B cell (primary cell): ENCODE measurements at regions of chr1 and their contacts with region 1.

Region 1: DNA sequence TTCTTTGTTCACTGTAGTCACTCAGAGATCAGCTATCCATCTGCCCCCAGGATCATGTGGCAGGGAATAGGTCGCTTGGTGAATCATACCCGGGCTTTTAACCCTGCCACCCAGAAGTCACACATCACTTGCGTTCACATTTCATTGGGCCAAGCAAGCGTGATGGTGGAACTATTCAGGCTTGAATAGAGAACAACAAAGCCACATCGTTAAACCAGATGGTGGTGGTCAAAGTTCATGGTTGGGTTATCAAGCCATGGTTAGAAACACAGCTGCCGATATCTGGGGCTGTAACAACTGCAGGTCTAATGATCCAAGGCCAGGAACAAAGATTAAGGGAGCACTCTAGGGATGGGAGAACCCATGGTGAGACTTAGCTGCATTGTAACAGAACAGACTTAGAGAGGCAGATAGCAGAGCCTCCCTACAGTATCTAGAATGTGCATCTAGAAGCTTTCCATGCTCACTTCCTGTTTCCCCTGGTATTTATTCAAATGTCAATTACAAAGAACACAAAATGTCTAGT is 40.0 kb upstream of the PTPRC start:
- DNase-seq: peak; percentile 90
- ATAC-seq: peak; percentile 81
- H3K4me3 ChIP-seq: peak overlapping the region; percentile 44 to 70 (median 64)
- H3K4me3 Mint-ChIP-seq: peak overlapping the region; percentile 97
- H3K27ac ChIP-seq: peak overlapping the region; percentile 94 to 96
- H3K27ac Mint-ChIP-seq: peak overlapping the region; percentile 99
- H3K4me1 ChIP-seq: peaks cover 75 to 80% of the 10 kb centered on the region in 2 donors
- H3K4me1 Mint-ChIP-seq: peaks cover 81% of the 10 kb centered on the region
- H3K27me3 ChIP-seq: no peaks in the 10 kb centered on the region
- H3K27me3 Mint-ChIP-seq: no peaks in the 10 kb centered on the region
- CTCF ChIP-seq: no peak

Region 2: GRCh38 chr1:198534548-198535418 is 64.1 kb before region 1 on chr1:
- CTCF ChIA-PET with region 1: interaction called, 10 read pairs
- POLR2A ChIA-PET with region 1: no interaction called
- intact Hi-C with region 1: no loop called
- DNase-seq: peak; percentile 28
- ATAC-seq: peak; percentile 56
- H3K4me3 ChIP-seq: peak overlapping the region in 1 of 5 experiments; percentile 14
- H3K4me3 Mint-ChIP-seq: peak overlapping the region; percentile 46
- H3K27ac ChIP-seq: peak overlapping the region; percentile 54 to 70
- H3K27ac Mint-ChIP-seq: peak overlapping the region; percentile 67
- H3K4me1 ChIP-seq: peaks cover 46 to 78% of the 10 kb centered on the region in 2 donors
- H3K4me1 Mint-ChIP-seq: peaks cover 83% of the 10 kb centered on the region
- H3K27me3 ChIP-seq: no peaks in the 10 kb centered on the region
- H3K27me3 Mint-ChIP-seq: no peaks in the 10 kb centered on the region
- CTCF ChIP-seq: no peak

Region 3: GRCh38 chr1:198556971-198557370 is 41.9 kb before region 1 on chr1:
- CTCF ChIA-PET with region 1: interaction called, 4 read pairs
- POLR2A ChIA-PET with region 1: interaction called, 5 read pairs
- intact Hi-C with region 1: loop called (anchors 2 kb)
- DNase-seq: peak; percentile 84
- ATAC-seq: peak; percentile 90
- H3K4me3 ChIP-seq: peak overlapping the region in 3 of 5 experiments; percentile 8 to 53 (median 25)
- H3K4me3 Mint-ChIP-seq: peak overlapping the region; percentile 38
- H3K27ac ChIP-seq: peak overlapping the region; percentile 30 to 58
- H3K27ac Mint-ChIP-seq: peak overlapping the region; percentile 47
- H3K4me1 ChIP-seq: peaks cover 46 to 53% of the 10 kb centered on the region in 2 donors
- H3K4me1 Mint-ChIP-seq: peaks cover 60% of the 10 kb centered on the region
- H3K27me3 ChIP-seq: no peaks in the 10 kb centered on the region
- H3K27me3 Mint-ChIP-seq: no peaks in the 10 kb centered on the region
- CTCF ChIP-seq: no peak

Region 4: DNA sequence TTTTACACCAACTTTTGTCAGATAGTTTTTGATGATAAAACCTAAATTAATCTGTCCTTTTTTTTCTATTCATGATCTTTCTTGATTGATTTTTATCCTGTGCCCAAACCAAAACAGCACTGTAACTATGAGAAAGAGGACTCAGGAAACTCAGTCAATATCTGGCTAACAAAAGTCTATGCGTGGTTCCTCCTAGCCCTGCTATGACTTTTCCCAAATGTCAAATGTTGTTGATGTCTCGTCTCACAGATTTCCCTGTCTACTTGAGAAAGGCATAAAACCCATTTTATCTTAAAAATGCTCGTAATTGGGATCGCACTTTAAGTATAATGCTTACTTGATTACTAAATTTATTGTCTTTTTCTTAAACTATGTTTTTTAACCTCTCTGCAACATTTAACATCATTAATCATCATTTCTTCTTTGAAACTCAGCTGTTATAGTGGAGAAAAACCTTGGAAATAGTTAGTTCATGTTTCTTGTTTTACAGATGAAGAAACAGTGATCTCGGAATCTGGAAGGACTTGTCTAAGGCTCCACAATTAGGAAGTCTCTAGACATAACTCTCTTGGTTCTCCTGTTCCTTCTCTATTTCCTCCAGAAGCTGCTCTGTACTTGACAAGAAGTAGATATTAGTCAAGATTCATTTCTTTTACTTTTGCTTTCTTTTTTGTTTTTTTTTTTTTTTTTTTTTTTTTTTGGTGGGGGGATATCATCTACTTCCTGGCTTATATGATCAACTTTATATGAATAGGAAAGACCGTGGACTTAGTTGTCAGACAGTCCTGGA is 13.8 kb after region 1 on chr1:
- CTCF ChIA-PET with region 1: interaction called, 6 read pairs
- POLR2A ChIA-PET with region 1: interaction called, 4 read pairs
- intact Hi-C with region 1: loop called (anchors 2 kb)
- DNase-seq: peak; percentile 58
- ATAC-seq: peak; percentile 56
- H3K4me3 ChIP-seq: peak overlapping the region in 3 of 5 experiments; percentile 4 to 57 (median 15)
- H3K4me3 Mint-ChIP-seq: peak overlapping the region; percentile 79
- H3K27ac ChIP-seq: peak overlapping the region; percentile 40 to 73
- H3K27ac Mint-ChIP-seq: peak overlapping the region; percentile 92
- H3K4me1 ChIP-seq: peaks cover 24 to 36% of the 10 kb centered on the region in 2 donors
- H3K4me1 Mint-ChIP-seq: peaks cover 57% of the 10 kb centered on the region
- H3K27me3 ChIP-seq: no peaks in the 10 kb centered on the region
- H3K27me3 Mint-ChIP-seq: no peaks in the 10 kb centered on the region
- CTCF ChIP-seq: no peak

Region 5: DNA sequence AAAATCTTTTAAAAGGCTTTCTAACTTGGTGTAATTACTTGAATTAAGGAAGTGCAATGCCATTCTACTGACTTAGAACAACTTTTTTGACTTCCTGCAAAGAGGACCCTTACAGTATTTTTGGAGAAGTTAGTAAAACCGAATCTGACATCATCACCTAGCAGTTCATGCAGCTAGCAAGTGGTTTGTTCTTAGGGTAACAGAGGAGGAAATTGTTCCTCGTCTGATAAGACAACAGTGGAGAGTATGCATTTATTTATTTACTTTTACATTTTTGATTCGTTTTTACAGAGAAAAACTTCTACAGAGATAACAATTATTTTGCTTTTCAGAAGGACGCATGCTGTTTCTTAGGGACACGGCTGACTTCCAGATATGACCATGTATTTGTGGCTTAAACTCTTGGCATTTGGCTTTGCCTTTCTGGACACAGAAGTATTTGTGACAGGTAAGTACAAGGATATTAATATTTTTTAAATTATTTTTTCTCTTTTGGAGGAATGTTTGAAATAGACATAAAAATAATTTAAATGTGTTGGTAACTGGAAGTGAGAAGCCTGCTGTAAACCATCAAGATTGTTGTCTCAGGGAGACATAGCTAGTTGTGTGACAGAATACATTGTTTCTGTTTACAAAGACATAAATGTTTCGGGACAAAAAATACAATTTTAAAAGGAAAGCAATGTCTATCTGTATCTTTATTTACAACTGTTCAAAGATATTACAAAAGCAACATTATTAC is 40.2 kb after region 1 on chr1 and contains the start of gene PTPRC:
- CTCF ChIA-PET with region 1: interaction called, 14 read pairs
- POLR2A ChIA-PET with region 1: interaction called, 15 read pairs
- intact Hi-C with region 1: loop called (anchors 1 kb)
- DNase-seq: peak; percentile 87
- ATAC-seq: peak; percentile 81
- H3K4me3 ChIP-seq: peak within 1 kb of the TSS; percentile 60 to 98 (median 87)
- H3K4me3 Mint-ChIP-seq: peak within 1 kb of the TSS; percentile 89
- H3K27ac ChIP-seq: peak within 1 kb of the TSS; percentile 82 to 94
- H3K27ac Mint-ChIP-seq: peak within 1 kb of the TSS; percentile 94
- H3K4me1 ChIP-seq: peaks cover 49 to 63% of the 10 kb centered on the region in 2 donors
- H3K4me1 Mint-ChIP-seq: peaks cover 65% of the 10 kb centered on the region
- H3K27me3 ChIP-seq: no peaks in the 10 kb centered on the region
- H3K27me3 Mint-ChIP-seq: no peaks in the 10 kb centered on the region
- CTCF ChIP-seq: no peak
- total RNA-seq, gene PTPRC: 543 and 545 TPM in 2 replicates